T-cell (primary cell): ENCODE measurements at regions of chr12 and their contacts with region 1.

Region 1: GRCh38 chr12:128961308-128961923 is 108.1 kb downstream of the GLT1D1 start:
- DNase-seq: no peak
- ATAC-seq: no peak
- H3K4me3 ChIP-seq: no peak overlapping the region
- H3K4me3 Mint-ChIP-seq: no peak overlapping the region
- H3K27ac ChIP-seq: no peak overlapping the region
- H3K27ac Mint-ChIP-seq: no peak overlapping the region
- H3K4me1 ChIP-seq: no peaks in the 10 kb centered on the region
- H3K4me1 Mint-ChIP-seq: no peaks in the 10 kb centered on the region
- H3K27me3 ChIP-seq: peaks cover 0 to 18% of the 10 kb centered on the region in 2 experiments
- H3K27me3 Mint-ChIP-seq: peaks cover 5 to 12% of the 10 kb centered on the region in 2 donors

Region 2: DNA sequence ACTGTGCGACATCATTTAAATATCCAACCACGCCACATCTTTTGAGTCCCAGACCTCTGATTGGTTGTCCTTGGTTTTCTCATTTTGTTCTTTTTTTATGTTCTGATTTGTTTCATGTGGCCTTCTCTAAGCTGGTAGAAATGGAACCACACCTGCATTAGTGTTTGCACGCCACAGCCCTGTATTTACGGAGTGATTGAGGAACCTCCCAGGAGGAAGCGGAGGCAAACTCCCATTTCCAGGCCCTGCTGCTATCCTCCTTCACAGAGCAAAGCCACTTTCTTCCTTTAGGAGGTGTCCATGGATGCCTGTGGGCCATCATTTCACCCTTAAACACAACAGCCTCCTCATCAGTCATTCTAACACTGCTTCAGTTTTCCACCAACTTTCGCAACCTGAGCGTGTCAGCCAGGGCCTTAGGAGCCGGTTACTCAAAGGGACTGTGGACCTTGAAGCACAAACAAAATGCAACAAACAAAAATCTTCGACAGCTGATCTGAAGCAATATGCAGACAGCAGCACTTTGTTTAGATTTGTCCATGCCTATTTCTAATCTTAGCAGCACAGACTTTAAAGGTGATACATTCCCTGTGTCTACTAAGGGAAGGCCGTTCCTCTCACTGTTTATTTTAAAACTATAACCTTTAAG is 1952.5 kb before region 1 on chr12:
- CTCF ChIA-PET with region 1: no interaction called
- POLR2A ChIA-PET with region 1: interaction called in 1 of 2 experiments, 19 read pairs
- DNase-seq: no peak
- ATAC-seq: no peak
- H3K4me3 ChIP-seq: no peak overlapping the region
- H3K4me3 Mint-ChIP-seq: no peak overlapping the region
- H3K27ac ChIP-seq: no peak overlapping the region
- H3K27ac Mint-ChIP-seq: no peak overlapping the region
- H3K4me1 ChIP-seq: no peaks in the 10 kb centered on the region
- H3K4me1 Mint-ChIP-seq: no peaks in the 10 kb centered on the region
- H3K27me3 ChIP-seq: peaks cover 0 to 3% of the 10 kb centered on the region in 2 experiments
- H3K27me3 Mint-ChIP-seq: peaks cover 4 to 9% of the 10 kb centered on the region in 2 donors

Region 3: GRCh38 chr12:129179941-129180553 is 218.6 kb after region 1 on chr12:
- CTCF ChIA-PET with region 1: no interaction called
- POLR2A ChIA-PET with region 1: no interaction called
- DNase-seq: no peak
- ATAC-seq: no peak
- H3K4me3 ChIP-seq: no peak overlapping the region
- H3K4me3 Mint-ChIP-seq: no peak overlapping the region
- H3K27ac ChIP-seq: no peak overlapping the region
- H3K27ac Mint-ChIP-seq: no peak overlapping the region
- H3K4me1 ChIP-seq: no peaks in the 10 kb centered on the region
- H3K4me1 Mint-ChIP-seq: no peaks in the 10 kb centered on the region
- H3K27me3 ChIP-seq: no peaks in the 10 kb centered on the region
- H3K27me3 Mint-ChIP-seq: no peaks in the 10 kb centered on the region

Region 4: DNA sequence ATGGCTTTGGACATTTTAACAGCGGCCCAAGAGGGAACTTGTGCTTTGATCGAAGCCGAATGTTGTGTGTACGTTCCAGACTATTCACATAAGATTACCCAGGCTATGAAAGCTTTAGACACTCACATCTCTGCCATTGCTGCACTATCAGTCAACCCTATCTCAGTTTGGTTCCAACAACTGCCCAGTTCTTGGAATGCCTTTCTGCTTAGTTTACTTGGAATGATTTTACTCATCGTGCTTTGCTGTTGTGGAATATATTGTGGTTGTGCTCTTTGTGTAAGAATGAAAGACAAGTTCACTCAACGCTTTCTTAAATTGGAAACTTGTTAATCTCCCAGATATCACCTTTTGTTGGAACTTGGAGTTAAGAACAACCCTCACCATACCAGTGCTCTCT is 390.1 kb after region 1 on chr12:
- CTCF ChIA-PET with region 1: no interaction called
- POLR2A ChIA-PET with region 1: no interaction called
- DNase-seq: no peak
- ATAC-seq: no peak
- H3K4me3 ChIP-seq: no peak overlapping the region
- H3K4me3 Mint-ChIP-seq: no peak overlapping the region
- H3K27ac ChIP-seq: no peak overlapping the region
- H3K27ac Mint-ChIP-seq: no peak overlapping the region
- H3K4me1 ChIP-seq: no peaks in the 10 kb centered on the region
- H3K4me1 Mint-ChIP-seq: no peaks in the 10 kb centered on the region
- H3K27me3 ChIP-seq: no peaks in the 10 kb centered on the region
- H3K27me3 Mint-ChIP-seq: no peaks in the 10 kb centered on the region